Endothelial cell of umbilical vein (primary cell): ENCODE measurements at regions of chr13 and their contacts with region 1.

Region 1: GRCh38 chr13:46126552-46127357 is 21.9 kb upstream of the CPB2 start:
- DNase-seq: peak; percentile 85
- H3K4me3 ChIP-seq: no peak overlapping the region
- H3K27ac ChIP-seq: no peak overlapping the region
- H3K4me1 ChIP-seq: peaks cover 22% of the 10 kb centered on the region
- H3K27me3 ChIP-seq: peaks cover 16 to 21% of the 10 kb centered on the region in 2 experiments
- CTCF ChIP-seq: peak; percentile 86 to 97
- POLR2A ChIP-seq: no peak

Region 2: DNA sequence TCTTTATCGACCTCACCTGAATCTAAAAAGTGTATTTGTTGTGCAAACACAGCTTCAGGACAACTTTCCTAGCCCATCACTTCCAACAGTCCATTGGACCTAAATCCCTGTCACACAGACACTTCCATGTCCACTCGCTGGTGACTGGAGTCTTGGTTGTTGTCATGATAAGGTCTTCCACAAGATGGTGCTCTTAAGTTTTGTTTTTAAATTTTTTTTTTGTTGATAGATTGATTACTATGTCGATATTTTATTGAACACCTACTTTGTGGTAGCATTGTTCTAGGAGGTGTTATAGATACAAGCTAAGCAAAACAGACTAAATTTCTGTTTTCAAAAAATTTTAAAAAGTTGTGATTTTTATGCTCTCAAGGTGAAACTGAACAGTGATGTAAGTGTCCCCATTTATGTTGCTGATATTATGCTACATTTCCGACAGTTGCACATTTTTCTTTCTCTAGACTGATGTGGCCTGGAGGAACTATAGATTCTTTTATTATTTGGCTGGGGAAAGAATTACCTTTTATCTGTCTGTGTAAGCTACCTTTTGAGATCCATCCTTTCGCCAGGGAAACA is 503.2 kb before region 1 on chr13:
- CTCF ChIA-PET with region 1: interaction called, 42 read pairs
- POLR2A ChIA-PET with region 1: interaction called, 3 read pairs
- dilution Hi-C with region 1: no loop called
- intact Hi-C with region 1: no loop called
- DNase-seq: peak; percentile 31
- H3K4me3 ChIP-seq: no peak overlapping the region
- H3K27ac ChIP-seq: no peak overlapping the region
- H3K4me1 ChIP-seq: no peaks in the 10 kb centered on the region
- H3K27me3 ChIP-seq: peaks cover 2 to 16% of the 10 kb centered on the region in 2 experiments
- CTCF ChIP-seq: peak; percentile 19 to 36
- POLR2A ChIP-seq: no peak

Region 3: GRCh38 chr13:45817833-45818232 is 308.9 kb before region 1 on chr13:
- CTCF ChIA-PET with region 1: interaction called, 12 read pairs
- POLR2A ChIA-PET with region 1: no interaction called
- dilution Hi-C with region 1: no loop called
- intact Hi-C with region 1: no loop called
- DNase-seq: peak; percentile 6
- H3K4me3 ChIP-seq: no peak overlapping the region
- H3K27ac ChIP-seq: no peak overlapping the region
- H3K4me1 ChIP-seq: no peaks in the 10 kb centered on the region
- H3K27me3 ChIP-seq: peaks cover under 1 to 3% of the 10 kb centered on the region in 2 experiments
- CTCF ChIP-seq: no peak
- POLR2A ChIP-seq: no peak

Region 4: GRCh38 chr13:46052319-46053161 is 74.2 kb before region 1 on chr13 and contains the start of gene ZC3H13:
- CTCF ChIA-PET with region 1: interaction called, 14 read pairs
- POLR2A ChIA-PET with region 1: no interaction called
- dilution Hi-C with region 1: no loop called
- intact Hi-C with region 1: loop called (anchors 1 kb)
- DNase-seq: peak; percentile 93
- H3K4me3 ChIP-seq: peak within 1 kb of the TSS; percentile 83 to 98 (median 96)
- H3K27ac ChIP-seq: peak within 1 kb of the TSS; percentile 86
- H3K4me1 ChIP-seq: peaks cover 26% of the 10 kb centered on the region
- H3K27me3 ChIP-seq: no peaks in the 10 kb centered on the region
- CTCF ChIP-seq: peak; percentile 8 to 15
- POLR2A ChIP-seq: peak; percentile 67
- total RNA-seq, gene ZC3H13: 32.0 and 36.6 TPM in 2 replicates

Region 5: DNA sequence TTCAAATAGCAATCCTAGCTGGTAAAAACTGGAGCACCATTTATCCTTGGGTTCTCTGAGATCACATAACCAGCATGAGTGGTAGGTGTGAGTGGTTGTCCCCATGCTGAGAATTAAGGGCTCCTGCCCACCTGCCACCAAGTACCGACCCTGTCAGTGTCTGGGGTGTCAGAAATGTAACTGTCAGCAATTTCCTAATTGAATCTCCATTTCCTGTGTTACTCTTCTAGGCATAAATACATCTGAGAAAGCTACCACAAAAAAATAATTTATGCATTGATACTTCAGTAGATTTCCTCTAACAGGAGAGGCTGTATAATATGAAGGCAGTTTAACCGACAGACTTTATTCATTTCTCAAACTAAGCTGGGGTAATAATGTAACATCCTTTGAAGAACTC is 47.0 kb before region 1 on chr13:
- CTCF ChIA-PET with region 1: no interaction called
- POLR2A ChIA-PET with region 1: no interaction called
- dilution Hi-C with region 1: no loop called
- intact Hi-C with region 1: no loop called
- DNase-seq: no peak
- H3K4me3 ChIP-seq: no peak overlapping the region
- H3K27ac ChIP-seq: no peak overlapping the region
- H3K4me1 ChIP-seq: no peaks in the 10 kb centered on the region
- H3K27me3 ChIP-seq: peaks cover 0 to 5% of the 10 kb centered on the region in 2 experiments
- CTCF ChIP-seq: no peak
- POLR2A ChIP-seq: no peak

Region 6: GRCh38 chr13:46295491-46296114 is 168.8 kb after region 1 on chr13:
- CTCF ChIA-PET with region 1: interaction called, 4 read pairs
- POLR2A ChIA-PET with region 1: no interaction called
- dilution Hi-C with region 1: no loop called
- intact Hi-C with region 1: loop called (anchors 5 kb)
- DNase-seq: peak; percentile 48
- H3K4me3 ChIP-seq: no peak overlapping the region
- H3K27ac ChIP-seq: no peak overlapping the region
- H3K4me1 ChIP-seq: peaks cover 29% of the 10 kb centered on the region
- H3K27me3 ChIP-seq: no peaks in the 10 kb centered on the region
- CTCF ChIP-seq: no peak
- POLR2A ChIP-seq: no peak